ENCODE measurements at regions of chr17 and their contacts with region 1.

Region 1: DNA sequence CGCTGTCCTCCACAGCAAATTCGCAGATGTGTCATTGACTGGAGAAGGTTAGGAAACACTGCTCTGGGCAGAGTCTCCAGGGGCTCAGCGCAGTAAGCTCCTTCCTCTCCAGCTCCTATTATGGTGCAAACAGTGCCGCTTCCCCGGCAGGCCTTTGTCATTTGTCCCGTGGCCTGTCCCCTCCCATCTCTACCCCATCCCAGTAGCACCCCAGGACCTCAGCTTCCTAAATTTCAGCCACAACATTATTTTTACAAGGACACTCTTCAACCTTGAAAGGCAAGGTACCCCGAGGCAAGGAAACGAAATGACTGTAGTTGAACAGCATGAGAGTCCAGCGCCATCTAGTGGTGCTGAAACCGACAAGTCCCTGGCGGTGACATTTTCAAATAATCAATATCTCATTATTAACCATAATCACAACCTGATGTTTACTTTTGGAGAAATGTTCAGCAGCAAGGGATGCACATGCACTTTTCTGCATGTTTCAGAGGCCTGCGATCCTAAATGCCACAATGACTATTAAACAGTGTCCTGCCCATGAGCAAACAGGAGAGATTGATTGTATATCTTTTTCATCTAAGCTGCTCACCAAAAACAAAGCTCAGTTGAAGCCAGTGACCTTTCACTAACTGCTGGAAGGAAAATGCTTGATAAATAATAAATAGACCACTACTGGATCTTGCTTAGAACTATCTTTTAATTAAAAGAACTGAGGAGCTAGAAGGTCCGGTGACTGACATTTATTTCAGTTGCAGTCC is 16.5 kb downstream of the MRPS23 start:
- DNase-seq: peak; percentile 42 to 83 (median 70)
- ATAC-seq: peak; percentile 70
- H3K4me3 ChIP-seq: peak overlapping the region; percentile 30 to 34
- H3K4me3 Mint-ChIP-seq: no peak overlapping the region
- H3K27ac ChIP-seq: no peak overlapping the region
- H3K27ac Mint-ChIP-seq: no peak overlapping the region
- H3K4me1 ChIP-seq: peaks cover 4% of the 10 kb centered on the region
- H3K4me1 Mint-ChIP-seq: peaks cover 7% of the 10 kb centered on the region
- H3K27me3 ChIP-seq: no peaks in the 10 kb centered on the region
- H3K27me3 Mint-ChIP-seq: no peaks in the 10 kb centered on the region
- CTCF ChIP-seq: peak; percentile 96

Region 2: DNA sequence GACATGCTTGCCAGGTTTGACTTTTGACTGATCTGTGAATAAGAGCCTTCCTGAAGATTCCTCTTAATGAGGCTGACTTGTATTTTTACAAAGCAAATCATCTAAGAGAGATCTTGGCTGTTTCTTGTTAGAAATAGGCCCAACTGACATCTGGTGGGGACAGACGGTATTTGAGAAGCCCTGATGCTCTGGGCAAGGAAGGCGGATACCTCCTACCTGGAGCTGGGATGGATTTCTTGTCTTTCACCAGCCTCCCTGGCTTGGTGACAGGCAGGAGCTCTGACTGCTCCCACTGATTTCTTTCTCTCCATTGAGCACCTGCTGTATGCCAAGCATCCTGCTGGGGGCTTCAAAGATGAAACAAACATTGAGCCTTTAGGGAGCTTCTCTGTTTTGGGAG is 708.0 kb before region 1 on chr17:
- CTCF ChIA-PET with region 1: interaction called, 22 read pairs
- POLR2A ChIA-PET with region 1: no interaction called
- intact Hi-C with region 1: no loop called
- DNase-seq: no peak
- ATAC-seq: no peak
- H3K4me3 ChIP-seq: no peak overlapping the region
- H3K4me3 Mint-ChIP-seq: no peak overlapping the region
- H3K27ac ChIP-seq: no peak overlapping the region
- H3K27ac Mint-ChIP-seq: no peak overlapping the region
- H3K4me1 ChIP-seq: no peaks in the 10 kb centered on the region
- H3K4me1 Mint-ChIP-seq: no peaks in the 10 kb centered on the region
- H3K27me3 ChIP-seq: no peaks in the 10 kb centered on the region
- H3K27me3 Mint-ChIP-seq: no peaks in the 10 kb centered on the region
- CTCF ChIP-seq: no peak

Region 3: DNA sequence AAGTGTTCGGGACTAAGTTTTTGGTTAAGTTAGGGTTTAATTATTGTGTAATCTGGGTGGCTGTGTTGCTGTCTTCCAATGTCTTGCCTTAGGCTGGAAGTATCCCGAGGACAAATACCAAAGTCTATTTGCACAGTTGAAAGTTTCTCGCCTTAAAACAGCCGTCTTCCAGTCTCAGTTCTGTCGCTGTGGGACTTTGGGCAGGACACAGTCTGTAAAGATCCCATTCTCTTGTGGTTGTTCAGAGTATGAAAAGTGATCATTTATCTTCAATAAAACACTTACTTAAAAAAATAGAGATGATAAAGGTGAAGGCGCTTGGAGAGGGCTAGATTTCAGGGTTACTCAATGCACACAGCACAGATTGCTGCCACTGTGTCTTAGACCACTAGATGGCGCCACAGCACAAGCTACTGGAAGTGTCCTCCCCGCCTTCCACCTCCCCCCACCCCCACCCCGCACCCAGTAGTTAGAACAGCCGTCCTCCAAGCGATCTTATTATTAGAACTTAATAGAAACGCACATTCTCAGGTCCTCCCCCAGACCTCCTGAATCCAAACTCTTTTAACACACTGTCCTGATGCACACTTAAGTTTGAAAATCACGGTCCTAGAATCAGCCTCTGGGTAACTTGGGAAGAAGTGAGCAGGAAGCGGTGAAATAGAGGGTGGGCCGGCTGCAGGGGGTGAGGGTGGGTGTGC is 702.4 kb before region 1 on chr17:
- CTCF ChIA-PET with region 1: interaction called, 22 read pairs
- POLR2A ChIA-PET with region 1: no interaction called
- intact Hi-C with region 1: loop called in 1 of 2 experiments (anchors 1 kb)
- DNase-seq: peak; percentile 71 to 88 (median 85)
- ATAC-seq: peak; percentile 95
- H3K4me3 ChIP-seq: no peak overlapping the region
- H3K4me3 Mint-ChIP-seq: no peak overlapping the region
- H3K27ac ChIP-seq: no peak overlapping the region
- H3K27ac Mint-ChIP-seq: no peak overlapping the region
- H3K4me1 ChIP-seq: peaks cover 3% of the 10 kb centered on the region
- H3K4me1 Mint-ChIP-seq: peaks cover 9% of the 10 kb centered on the region
- H3K27me3 ChIP-seq: no peaks in the 10 kb centered on the region
- H3K27me3 Mint-ChIP-seq: no peaks in the 10 kb centered on the region
- CTCF ChIP-seq: peak; percentile 83

Region 4: DNA sequence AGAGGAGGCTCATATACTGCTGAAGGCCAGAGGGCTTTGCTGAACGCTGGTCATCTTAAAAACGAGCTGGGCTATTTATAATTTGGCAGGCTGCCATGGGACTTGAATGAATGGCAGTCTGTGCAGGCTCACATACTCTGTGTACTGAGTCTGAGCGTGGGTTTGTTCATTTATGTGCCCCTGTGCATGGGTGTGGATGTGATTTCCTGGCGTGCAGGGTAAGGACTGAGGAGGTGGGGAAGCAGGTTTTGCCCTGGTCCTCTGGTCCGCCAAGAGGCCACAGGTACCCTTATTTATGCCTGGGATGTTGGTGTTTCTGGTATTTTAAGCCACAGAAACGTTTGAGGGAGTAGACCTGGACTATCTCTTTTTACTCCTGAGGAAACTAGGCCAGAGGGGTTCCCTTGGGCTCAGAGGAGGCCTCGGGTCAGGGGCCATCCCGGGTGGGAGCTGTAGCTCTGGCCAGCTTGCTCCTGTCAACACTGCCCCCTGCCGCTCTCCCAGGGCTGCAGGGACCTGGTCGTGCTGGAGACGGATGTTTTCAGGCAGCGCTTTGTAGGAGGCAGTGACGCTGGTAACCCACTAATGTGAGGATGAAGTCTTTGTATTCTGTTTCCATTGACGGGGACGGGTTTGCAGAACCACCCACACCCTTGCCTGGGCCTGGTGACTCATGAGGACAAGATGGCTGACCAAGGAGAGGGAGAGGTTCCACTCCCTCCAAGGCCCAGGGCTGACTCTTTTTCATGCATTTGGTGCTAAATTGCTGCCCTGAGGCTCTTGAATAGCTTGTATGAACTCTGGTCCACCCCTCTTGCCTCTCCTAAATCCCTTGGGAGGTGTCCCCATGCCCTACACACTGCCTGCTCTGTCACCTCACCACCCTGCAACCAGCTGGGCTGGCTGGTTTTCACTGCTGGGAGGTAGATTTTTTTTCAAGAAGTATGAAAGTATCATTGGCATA is 392.6 kb before region 1 on chr17:
- CTCF ChIA-PET with region 1: no interaction called
- POLR2A ChIA-PET with region 1: no interaction called
- intact Hi-C with region 1: no loop called
- DNase-seq: peak; percentile 31 to 89 (median 63)
- ATAC-seq: peak; percentile 82
- H3K4me3 ChIP-seq: peak overlapping the region in 1 of 2 experiments; percentile 14
- H3K4me3 Mint-ChIP-seq: peak overlapping the region; percentile 8
- H3K27ac ChIP-seq: peak overlapping the region in 1 of 2 experiments; percentile 37
- H3K27ac Mint-ChIP-seq: peak overlapping the region; percentile 94
- H3K4me1 ChIP-seq: peaks cover 41% of the 10 kb centered on the region
- H3K4me1 Mint-ChIP-seq: peaks cover 72% of the 10 kb centered on the region
- H3K27me3 ChIP-seq: no peaks in the 10 kb centered on the region
- H3K27me3 Mint-ChIP-seq: no peaks in the 10 kb centered on the region
- CTCF ChIP-seq: peak; percentile 20

Region 5: GRCh38 chr17:57597531-57598453 is 235.6 kb before region 1 on chr17:
- CTCF ChIA-PET with region 1: interaction called, 4 read pairs
- POLR2A ChIA-PET with region 1: no interaction called
- intact Hi-C with region 1: loop called in 1 of 2 experiments (anchors 10 kb)
- DNase-seq: peak in 5 of 9 experiments; percentile 33 to 66 (median 57)
- ATAC-seq: no peak
- H3K4me3 ChIP-seq: no peak overlapping the region
- H3K4me3 Mint-ChIP-seq: no peak overlapping the region
- H3K27ac ChIP-seq: peak overlapping the region in 1 of 2 experiments; percentile 32
- H3K27ac Mint-ChIP-seq: peak overlapping the region; percentile 89
- H3K4me1 ChIP-seq: peaks cover 52% of the 10 kb centered on the region
- H3K4me1 Mint-ChIP-seq: peaks cover 58% of the 10 kb centered on the region
- H3K27me3 ChIP-seq: no peaks in the 10 kb centered on the region
- H3K27me3 Mint-ChIP-seq: no peaks in the 10 kb centered on the region
- CTCF ChIP-seq: peak; percentile 64

Region 6: DNA sequence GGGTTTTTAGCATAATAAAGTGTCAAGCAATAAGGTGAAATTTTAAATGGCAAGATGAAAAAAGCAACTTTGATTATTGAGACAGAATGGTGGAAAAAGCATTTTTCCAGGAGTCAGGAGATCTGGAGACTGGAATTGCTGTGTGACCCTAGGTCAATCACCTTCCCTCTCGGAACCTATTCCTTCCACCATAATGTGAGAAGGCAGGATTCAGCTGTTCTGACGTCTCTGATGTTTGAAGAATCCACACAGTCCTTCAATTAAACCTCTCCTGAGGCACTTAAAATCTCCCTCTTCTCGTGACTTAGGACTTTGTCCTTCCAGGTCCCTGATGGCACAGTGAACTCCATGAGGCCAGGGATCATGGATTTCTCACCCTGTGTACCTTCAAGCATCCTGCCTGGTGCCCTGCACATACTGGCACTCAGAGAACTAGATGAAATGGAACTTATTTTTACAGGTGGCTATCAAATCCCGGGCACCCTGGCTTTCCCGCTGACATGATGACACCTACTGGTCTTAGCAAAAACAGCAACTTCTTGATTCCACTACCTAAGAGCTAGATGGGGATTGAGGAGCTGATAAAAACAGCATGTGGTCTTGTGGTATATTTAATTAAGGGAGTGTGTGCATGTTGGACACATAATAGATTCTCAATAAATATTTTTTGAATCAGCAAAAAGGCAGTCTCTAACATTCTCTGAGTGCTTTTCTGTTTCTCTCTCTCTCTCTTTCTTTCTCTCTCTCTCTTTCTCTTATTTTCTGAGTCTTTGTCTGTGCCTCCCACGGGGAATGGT is 85.9 kb before region 1 on chr17:
- CTCF ChIA-PET with region 1: interaction called, 3 read pairs
- POLR2A ChIA-PET with region 1: no interaction called
- intact Hi-C with region 1: loop called in 1 of 2 experiments (anchors 5 kb)
- DNase-seq: peak in 7 of 9 experiments; percentile 3 to 77 (median 52)
- ATAC-seq: peak; percentile 77
- H3K4me3 ChIP-seq: no peak overlapping the region
- H3K4me3 Mint-ChIP-seq: no peak overlapping the region
- H3K27ac ChIP-seq: no peak overlapping the region
- H3K27ac Mint-ChIP-seq: no peak overlapping the region
- H3K4me1 ChIP-seq: peaks cover 6% of the 10 kb centered on the region
- H3K4me1 Mint-ChIP-seq: peaks cover 10% of the 10 kb centered on the region
- H3K27me3 ChIP-seq: no peaks in the 10 kb centered on the region
- H3K27me3 Mint-ChIP-seq: no peaks in the 10 kb centered on the region
- CTCF ChIP-seq: peak; percentile 81

Region 7: DNA sequence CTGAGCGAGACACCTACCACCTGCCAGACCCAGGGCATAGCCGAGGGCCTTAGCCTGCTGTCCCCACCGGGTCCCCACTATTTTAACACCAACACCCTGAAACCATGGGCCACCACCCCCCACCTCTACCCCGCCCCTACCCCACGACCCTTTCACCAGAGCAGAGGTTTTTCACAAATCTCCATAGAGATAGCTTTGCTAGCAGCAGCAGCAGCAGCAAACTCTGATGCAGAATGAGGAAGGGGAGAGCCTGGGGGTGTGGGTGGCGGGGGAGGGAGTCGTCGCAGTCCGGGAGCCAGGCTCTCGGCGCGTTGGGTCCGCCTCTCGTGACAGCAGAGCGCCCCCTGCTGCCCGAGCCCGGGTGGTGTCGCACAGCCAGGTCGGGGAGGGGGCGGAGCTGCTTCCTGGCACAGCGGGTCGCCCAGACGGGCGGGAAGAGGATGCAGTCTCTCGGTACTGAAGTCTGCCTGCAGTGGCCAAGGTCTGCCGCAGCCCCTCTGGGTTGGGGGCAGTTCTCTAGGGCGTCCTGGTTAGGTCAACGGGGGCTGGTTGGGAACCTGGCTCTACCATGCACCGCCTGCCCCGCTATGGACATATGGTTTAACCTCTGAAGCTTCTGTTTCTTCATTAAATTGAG is 50.1 kb before region 1 on chr17:
- CTCF ChIA-PET with region 1: interaction called, 13 read pairs
- POLR2A ChIA-PET with region 1: no interaction called
- intact Hi-C with region 1: no loop called
- DNase-seq: peak; percentile 53 to 85 (median 72)
- ATAC-seq: peak; percentile 91
- H3K4me3 ChIP-seq: peak overlapping the region in 1 of 2 experiments; percentile 25
- H3K4me3 Mint-ChIP-seq: no peak overlapping the region
- H3K27ac ChIP-seq: no peak overlapping the region
- H3K27ac Mint-ChIP-seq: no peak overlapping the region
- H3K4me1 ChIP-seq: peaks cover 8% of the 10 kb centered on the region
- H3K4me1 Mint-ChIP-seq: peaks cover 8% of the 10 kb centered on the region
- H3K27me3 ChIP-seq: peaks cover 3 to 6% of the 10 kb centered on the region in 2 experiments
- H3K27me3 Mint-ChIP-seq: peaks cover 16% of the 10 kb centered on the region
- CTCF ChIP-seq: peak; percentile 88

Region 8: GRCh38 chr17:57811638-57812280 is 21.6 kb before region 1 on chr17:
- CTCF ChIA-PET with region 1: interaction called, 18 read pairs
- POLR2A ChIA-PET with region 1: interaction called, 3 read pairs
- intact Hi-C with region 1: no loop called
- DNase-seq: no peak
- ATAC-seq: no peak
- H3K4me3 ChIP-seq: no peak overlapping the region
- H3K4me3 Mint-ChIP-seq: no peak overlapping the region
- H3K27ac ChIP-seq: no peak overlapping the region
- H3K27ac Mint-ChIP-seq: no peak overlapping the region
- H3K4me1 ChIP-seq: no peaks in the 10 kb centered on the region
- H3K4me1 Mint-ChIP-seq: peaks cover 11% of the 10 kb centered on the region
- H3K27me3 ChIP-seq: no peaks in the 10 kb centered on the region
- H3K27me3 Mint-ChIP-seq: peaks cover 50% of the 10 kb centered on the region
- CTCF ChIP-seq: no peak

Measured in CD8-positive, alpha-beta T cell (primary cell).